PC-3 (cell line): ENCODE measurements at regions of chr10 and their contacts with region 1.

Region 1: DNA sequence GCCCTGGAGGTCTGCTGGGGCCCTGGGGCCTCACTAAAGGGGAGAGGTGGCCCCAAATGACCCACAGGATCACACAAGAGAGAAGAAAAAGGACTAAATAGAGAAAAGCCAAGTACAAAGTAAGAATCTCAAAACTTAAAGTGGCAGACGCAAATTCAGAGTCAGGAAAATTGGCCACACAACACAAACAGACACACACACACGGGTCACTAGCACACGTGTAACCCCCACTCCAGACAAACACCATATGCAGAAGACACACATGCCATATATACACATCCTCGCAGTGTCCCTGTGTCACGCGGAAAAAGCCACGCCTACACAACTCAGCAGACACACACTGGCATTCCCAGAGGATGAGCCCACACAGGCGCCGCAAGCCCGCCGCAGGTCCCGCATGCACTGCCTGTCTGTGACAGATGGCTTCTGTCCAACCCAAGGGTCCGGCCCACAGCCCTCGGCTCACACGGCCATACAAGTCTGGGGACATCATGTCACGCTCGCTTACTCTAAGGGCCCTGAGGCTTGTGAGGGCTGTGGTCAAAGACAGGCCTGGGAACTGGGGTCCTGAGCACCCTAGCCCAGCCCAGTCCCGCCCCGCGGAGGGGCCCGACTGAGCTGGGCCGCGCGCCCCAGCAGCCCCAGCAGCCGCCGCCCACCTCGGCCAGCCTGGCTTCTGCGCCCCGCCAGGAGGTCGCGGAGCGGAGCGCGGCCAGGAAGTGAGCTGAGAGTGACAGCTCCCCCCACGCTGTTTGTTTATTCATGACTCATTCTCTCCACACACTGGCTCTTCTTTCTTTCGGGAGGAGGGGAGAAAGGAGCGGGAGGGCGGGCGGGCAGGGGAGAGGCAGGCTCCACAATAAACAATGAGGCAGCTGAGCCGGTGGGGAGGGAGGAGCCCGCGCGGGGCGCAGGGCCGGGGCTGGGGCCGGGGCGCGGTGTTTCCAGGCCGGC is 95.5 kb upstream of the ZMIZ1 start:
- DNase-seq: peak; percentile 100
- ATAC-seq: peak; percentile 63
- H3K4me3 ChIP-seq: peak overlapping the region; percentile 60
- H3K27ac ChIP-seq: peak overlapping the region; percentile 79
- H3K4me1 ChIP-seq: peaks cover 39% of the 10 kb centered on the region
- H3K27me3 ChIP-seq: no peaks in the 10 kb centered on the region
- CTCF ChIP-seq: peak; percentile 20; the same call in 1 of the 2 replicates

Region 2: DNA sequence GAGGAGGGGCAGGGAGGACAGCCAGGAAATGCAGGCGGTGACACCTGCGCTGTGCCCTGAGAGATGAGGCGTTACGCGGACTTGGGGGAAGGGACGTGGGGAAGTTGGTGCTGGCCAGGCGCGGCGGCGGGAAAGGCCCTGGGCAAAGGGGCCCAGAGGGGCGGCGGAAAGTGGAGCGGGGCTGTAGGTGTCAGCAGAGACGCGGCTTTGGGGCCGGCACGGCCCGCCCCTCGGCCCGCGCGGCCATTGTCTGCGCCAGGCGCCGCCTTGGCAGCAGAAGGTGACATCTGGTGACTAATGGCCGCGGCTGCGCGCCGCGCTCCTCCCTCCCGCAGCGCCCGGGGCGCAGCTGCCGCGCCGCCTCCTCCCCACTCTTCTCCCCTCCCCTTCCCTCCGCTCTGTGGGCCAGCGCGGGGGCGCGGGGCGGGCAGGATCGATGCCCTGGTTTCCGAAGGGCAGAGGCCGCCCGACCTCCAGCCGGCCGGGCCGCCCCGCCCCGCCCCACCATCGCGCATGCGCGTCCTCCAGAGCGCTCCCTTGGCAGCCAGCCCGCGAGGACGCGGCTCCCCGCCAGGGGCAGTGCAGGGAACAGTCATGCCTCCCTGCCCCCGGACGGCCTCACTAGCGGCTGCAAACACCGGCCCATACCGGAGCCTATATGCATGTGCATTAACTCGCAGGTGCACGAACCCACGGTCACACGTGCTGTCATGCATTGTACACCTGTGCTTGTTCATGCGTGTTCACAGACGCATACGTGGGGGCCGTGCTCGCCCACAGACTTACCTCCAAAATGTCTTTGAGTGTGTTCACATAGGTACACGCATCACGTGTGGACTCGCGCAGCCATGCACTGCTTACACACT is 670.0 kb before region 1 on chr10:
- CTCF ChIA-PET with region 1: no interaction called
- POLR2A ChIA-PET with region 1: no interaction called
- intact Hi-C with region 1: loop called (anchors 1 kb)
- DNase-seq: peak; percentile 100
- ATAC-seq: peak; percentile 91
- H3K4me3 ChIP-seq: peak overlapping the region; percentile 67
- H3K27ac ChIP-seq: peak overlapping the region; percentile 11
- H3K4me1 ChIP-seq: peaks cover 14% of the 10 kb centered on the region
- H3K27me3 ChIP-seq: peaks cover 36% of the 10 kb centered on the region
- CTCF ChIP-seq: peak; percentile 93

Region 3: DNA sequence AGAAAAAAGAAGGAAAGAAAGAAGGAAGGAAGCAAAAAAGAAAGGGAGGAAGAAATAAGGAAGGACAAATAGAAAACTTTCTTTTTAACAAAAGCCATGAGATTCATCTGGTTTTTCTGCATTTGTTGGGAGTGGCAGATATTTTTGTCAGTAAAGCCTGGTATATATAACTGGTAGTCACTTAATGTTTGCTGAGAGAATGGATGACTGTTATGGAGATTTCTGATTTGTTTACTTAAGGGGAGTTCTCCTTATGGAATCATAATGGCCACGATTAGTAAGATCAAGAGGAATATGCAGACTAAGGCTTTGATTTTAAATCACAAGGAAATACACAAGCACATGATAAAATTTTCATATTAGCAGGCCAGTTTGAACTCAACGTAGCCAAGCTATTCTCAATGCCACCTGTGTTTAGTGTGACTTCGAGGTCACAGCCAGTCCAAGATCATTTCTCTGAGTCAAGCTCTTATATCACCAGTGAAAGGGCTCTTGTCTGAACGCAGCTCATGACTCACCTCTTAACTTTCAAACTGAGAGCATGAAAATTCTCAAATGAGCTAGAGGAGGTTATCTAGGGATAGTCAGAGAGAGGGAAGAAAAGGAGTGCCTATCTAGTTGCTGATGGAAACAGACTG is 349.5 kb before region 1 on chr10:
- CTCF ChIA-PET with region 1: no interaction called
- POLR2A ChIA-PET with region 1: no interaction called
- intact Hi-C with region 1: loop called (anchors 10 kb)
- DNase-seq: peak; percentile 99
- ATAC-seq: peak; percentile 84
- H3K4me3 ChIP-seq: peak overlapping the region; percentile 10
- H3K27ac ChIP-seq: peak overlapping the region; percentile 82
- H3K4me1 ChIP-seq: peaks cover 37% of the 10 kb centered on the region
- H3K27me3 ChIP-seq: no peaks in the 10 kb centered on the region
- CTCF ChIP-seq: no peak

Region 4: GRCh38 chr10:78805176-78805575 is 168.0 kb before region 1 on chr10:
- CTCF ChIA-PET with region 1: interaction called, 5 read pairs
- POLR2A ChIA-PET with region 1: interaction called, 5 read pairs
- intact Hi-C with region 1: loop called (anchors 1 kb)
- DNase-seq: peak; percentile 100
- ATAC-seq: peak; percentile 90
- H3K4me3 ChIP-seq: no peak overlapping the region
- H3K27ac ChIP-seq: peak overlapping the region; percentile 40
- H3K4me1 ChIP-seq: peaks cover 59% of the 10 kb centered on the region
- H3K27me3 ChIP-seq: no peaks in the 10 kb centered on the region
- CTCF ChIP-seq: no peak

Region 5: DNA sequence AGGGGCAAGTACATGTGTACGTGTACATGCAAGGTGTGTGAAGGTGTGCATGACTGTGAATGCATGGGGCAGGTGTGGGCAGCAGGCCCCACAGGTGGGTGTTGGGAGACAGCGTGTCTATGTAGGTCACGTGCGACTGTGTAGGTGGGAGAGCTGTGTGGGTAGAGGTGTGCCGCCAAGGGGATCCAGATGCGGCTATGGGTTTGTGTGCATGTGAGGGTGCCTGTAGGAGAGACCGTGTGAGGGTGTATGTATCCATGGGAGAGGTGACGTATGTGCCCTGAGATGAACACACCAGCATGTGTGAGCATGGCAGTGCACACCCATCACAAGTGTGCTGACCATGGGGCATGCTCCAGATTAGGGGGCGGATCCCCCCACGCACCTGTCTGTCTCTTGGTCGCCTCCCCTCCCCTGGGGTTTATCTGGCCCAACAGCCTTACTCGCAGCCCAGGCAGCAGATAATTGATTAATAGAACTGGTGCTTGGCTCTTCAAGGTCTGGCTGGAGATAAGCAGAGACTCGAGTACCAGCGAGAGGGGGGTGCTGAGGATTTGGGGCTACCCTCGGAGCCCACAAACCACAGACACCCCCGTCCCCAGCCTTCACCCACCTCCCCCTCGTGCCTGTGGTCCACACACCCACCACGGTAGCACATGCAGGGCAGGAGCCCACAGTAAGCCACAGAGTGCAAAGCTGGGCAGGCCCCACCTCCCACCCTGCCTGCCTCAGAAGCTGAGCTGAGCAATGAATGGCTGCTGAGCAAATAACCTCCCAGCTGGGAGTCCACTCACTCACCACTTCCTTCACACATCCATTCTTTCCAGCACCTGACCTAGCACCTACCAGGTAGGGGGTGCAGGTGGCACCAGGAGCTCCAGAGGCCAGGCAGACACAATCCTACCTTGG is 54.2 kb after region 1 on chr10:
- CTCF ChIA-PET with region 1: no interaction called
- POLR2A ChIA-PET with region 1: no interaction called
- intact Hi-C with region 1: no loop called
- DNase-seq: peak; percentile 50
- ATAC-seq: peak; percentile 17; the same call in 1 of the 2 replicates
- H3K4me3 ChIP-seq: no peak overlapping the region
- H3K27ac ChIP-seq: no peak overlapping the region
- H3K4me1 ChIP-seq: no peaks in the 10 kb centered on the region
- H3K27me3 ChIP-seq: peaks cover 24% of the 10 kb centered on the region
- CTCF ChIP-seq: no peak

Region 6: DNA sequence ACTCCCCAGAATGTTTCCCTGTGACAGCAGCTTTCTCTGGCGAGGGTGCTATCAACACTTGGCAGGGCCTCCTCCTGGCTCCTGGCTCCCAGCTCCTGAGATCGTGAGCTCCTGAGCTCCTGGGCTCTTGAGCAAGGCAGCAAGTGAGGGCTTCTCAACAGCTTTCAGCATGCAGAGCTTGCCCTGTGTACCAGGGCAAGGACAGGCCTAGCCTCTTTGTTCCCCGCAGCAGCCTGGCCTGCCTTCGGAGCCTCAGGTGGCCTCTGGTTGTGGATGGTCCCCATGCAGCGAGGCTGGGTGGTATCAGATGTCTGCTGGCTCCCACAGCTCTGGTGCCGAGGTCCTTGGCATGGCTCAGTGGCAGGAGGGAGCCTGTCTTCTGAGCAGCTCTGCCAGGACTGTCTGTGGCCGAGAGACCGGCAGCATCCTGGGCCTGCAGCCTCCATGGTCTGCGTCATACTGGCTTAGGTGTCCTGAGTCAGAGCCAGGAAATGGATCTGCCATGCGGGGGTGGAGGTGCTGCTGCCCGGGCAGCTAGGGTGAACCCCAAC is 139.7 kb after region 1 on chr10:
- CTCF ChIA-PET with region 1: no interaction called
- POLR2A ChIA-PET with region 1: interaction called, 10 read pairs
- intact Hi-C with region 1: no loop called
- DNase-seq: peak; percentile 97
- ATAC-seq: peak; percentile 93
- H3K4me3 ChIP-seq: no peak overlapping the region
- H3K27ac ChIP-seq: peak overlapping the region; percentile 59
- H3K4me1 ChIP-seq: peaks cover 30% of the 10 kb centered on the region
- H3K27me3 ChIP-seq: no peaks in the 10 kb centered on the region
- CTCF ChIP-seq: no peak

Region 7: DNA sequence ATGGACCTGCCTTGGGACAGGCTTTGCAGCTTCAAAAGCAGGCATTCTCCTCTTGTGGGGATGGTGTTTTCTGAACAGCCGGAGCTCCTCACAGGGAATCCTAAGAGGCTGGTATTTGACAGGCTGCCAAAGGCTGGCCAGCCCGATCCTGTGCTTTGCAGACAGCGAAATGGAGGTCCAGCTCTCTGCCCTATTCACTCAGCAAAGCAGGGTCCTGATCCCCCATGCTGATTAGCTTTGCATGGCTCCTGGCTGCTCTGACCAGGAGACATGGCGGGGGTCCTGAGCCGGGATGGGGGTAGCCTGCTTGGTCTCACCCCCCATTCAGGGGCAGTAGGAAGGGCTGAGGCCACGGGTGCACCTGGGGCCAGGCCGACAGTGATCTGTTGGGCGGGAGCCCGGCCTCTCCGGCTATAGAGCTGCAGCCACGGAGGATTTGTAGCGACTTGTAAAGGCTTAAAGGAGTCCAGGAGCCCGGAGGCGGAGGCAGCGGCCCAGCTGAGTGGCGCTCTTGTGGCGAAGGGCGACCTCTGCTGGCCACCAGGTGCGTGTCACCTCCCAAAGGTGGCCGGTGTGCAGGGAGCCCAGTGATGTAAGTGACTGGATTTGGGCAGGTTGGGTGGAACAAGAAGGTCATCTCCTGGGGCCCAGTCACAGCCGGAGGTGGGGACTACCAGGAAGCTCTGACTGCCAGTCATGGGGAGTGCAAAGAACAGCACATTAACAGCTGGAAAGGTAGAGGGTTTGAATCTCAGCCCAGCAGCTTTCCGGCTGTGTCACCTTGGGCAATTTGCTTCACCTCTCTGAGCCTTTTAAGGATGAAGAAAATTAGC is 222.1 kb after region 1 on chr10:
- CTCF ChIA-PET with region 1: interaction called, 18 read pairs
- POLR2A ChIA-PET with region 1: no interaction called
- intact Hi-C with region 1: loop called (anchors 1 kb)
- DNase-seq: peak; percentile 100
- ATAC-seq: peak; percentile 80
- H3K4me3 ChIP-seq: no peak overlapping the region
- H3K27ac ChIP-seq: no peak overlapping the region
- H3K4me1 ChIP-seq: peaks cover 28% of the 10 kb centered on the region
- H3K27me3 ChIP-seq: no peaks in the 10 kb centered on the region
- CTCF ChIP-seq: peak; percentile 100

Region 8: DNA sequence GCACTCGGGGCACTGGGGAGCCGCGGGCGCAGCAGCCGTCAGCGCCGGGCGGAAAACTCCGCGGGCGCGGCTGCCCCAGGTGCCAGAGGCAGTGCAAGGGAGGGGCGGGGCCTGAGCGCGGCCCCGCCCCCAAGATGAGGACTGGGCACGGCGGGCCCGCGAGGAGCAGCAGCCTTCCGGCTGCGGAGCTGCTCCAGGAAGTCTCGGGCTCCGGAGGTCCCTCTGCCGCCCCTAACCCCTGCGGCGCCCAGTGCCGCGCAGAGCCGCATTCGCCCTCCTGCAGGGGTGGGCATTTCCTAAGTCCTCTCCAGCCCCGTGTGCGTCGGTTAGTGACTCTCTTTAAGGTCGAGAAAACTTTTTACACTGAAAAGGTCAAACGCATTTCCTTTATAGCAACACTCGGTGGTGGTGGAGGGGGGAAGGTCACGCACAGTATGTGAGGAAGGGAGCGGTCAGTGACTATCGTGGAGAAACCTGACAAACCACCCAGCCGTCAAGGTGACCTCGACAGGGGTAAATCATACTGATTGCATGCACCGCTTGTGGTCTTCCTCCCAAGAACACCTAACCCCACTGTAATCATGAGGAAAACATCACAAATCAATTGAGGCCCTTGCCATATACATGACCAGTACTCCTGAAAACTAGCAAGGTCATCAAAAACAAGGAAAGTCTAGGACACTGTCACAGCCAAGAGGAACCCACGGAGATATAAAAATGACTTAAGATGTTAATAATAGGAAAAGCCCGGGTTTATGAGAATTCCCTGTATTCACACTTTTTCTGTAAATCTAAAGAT is 1232.5 kb after region 1 on chr10 and contains the start of gene ANXA11:
- CTCF ChIA-PET with region 1: no interaction called
- POLR2A ChIA-PET with region 1: interaction called, 23 read pairs
- intact Hi-C with region 1: no loop called
- DNase-seq: peak; percentile 100
- ATAC-seq: peak; percentile 52
- H3K4me3 ChIP-seq: peak within 1 kb of the TSS; percentile 69
- H3K27ac ChIP-seq: peak within 1 kb of the TSS; percentile 80
- H3K4me1 ChIP-seq: peaks cover 80% of the 10 kb centered on the region
- H3K27me3 ChIP-seq: no peaks in the 10 kb centered on the region
- CTCF ChIP-seq: peak; percentile 1; the same call in 1 of the 2 replicates
- total RNA-seq, gene ANXA11: 434 and 520 TPM in 2 replicates